Heart left ventricle (tissue), 16 donors: ENCODE measurements at regions of chr6 and their contacts with region 1.

Region 1: DNA sequence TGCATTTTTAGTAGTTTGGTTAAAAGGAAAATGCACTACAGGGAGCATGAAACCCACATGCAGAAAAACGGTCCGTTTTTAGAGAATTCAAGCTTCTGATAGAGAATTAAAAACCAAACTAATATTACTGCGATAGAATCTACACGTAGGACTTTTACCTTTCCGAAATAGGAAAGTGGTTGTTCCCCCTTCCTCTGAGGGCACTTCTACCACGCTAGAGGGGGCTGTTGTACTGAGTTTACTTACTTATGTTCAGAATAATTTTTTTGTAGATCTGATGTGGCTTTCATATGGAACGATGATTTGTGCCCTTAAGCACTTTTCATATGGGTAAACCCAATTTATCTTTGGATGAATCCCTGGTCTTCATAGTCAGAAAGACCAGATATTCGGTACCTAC is 264.3 kb upstream of the PLN start:
- DNase-seq: peak in 4 of 5 donors; percentile 30 to 50 (median 45)
- ATAC-seq: peak in 3 of 4 donors; percentile 46 to 68 (median 63)
- H3K4me3 ChIP-seq: peak overlapping the region in 2 of 12 donors; percentile 8 to 13
- H3K27ac ChIP-seq: peak overlapping the region in 3 of 12 donors; percentile 4 to 84 (median 77)
- H3K4me1 ChIP-seq: peaks cover 0 to 38% (median 8%) of the 10 kb centered on the region in 12 donors
- H3K27me3 ChIP-seq: no peaks in the 10 kb centered on the region
- CTCF ChIP-seq: peak; percentile 59 to 92 (median 82)
- POLR2A ChIP-seq: no peak

Region 2: GRCh38 chr6:118269659-118270058 is 14.1 kb before region 1 on chr6:
- intact Hi-C with region 1: no loop called
- DNase-seq: no peak
- ATAC-seq: no peak
- H3K4me3 ChIP-seq: no peak overlapping the region
- H3K27ac ChIP-seq: no peak overlapping the region
- H3K4me1 ChIP-seq: no peaks in the 10 kb centered on the region
- H3K27me3 ChIP-seq: no peaks in the 10 kb centered on the region
- CTCF ChIP-seq: no peak
- POLR2A ChIP-seq: no peak

Region 3: GRCh38 chr6:118354641-118355040 is 70.9 kb after region 1 on chr6:
- intact Hi-C with region 1: no loop called
- DNase-seq: no peak
- ATAC-seq: no peak
- H3K4me3 ChIP-seq: no peak overlapping the region
- H3K27ac ChIP-seq: no peak overlapping the region
- H3K4me1 ChIP-seq: peaks cover 0 to 4% (median 0%) of the 10 kb centered on the region in 12 donors
- H3K27me3 ChIP-seq: no peaks in the 10 kb centered on the region
- CTCF ChIP-seq: no peak
- POLR2A ChIP-seq: no peak

Region 4: DNA sequence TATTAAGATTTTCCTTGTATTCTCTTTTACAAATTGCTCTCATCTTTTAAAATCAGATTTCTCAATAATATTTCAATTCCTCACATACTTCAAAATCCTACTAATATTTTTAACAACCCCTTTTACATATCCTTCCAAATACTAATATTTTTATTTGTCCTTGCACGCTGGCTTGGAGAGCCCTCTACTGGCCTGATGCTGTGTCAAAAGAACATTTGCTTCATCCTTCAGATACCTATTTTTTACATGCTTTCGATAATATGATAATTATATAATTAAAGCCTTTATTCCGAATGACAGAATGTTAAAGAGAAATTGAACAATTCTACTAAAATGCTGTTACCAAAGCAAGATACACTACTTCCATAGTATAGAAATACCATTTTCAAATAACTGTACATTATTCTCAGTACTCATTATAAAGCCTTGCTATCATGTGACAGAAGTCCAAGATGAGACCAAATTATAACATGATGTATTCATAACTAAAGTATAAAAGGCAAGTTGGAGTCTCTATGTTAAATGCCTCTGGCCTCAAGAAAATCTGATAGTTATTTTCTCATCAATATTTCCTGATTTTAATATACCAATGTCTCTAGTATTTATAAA is 225.3 kb after region 1 on chr6:
- intact Hi-C with region 1: loop called (anchors 1 to 5 kb)
- DNase-seq: peak in 4 of 5 donors; percentile 35 to 51 (median 44)
- ATAC-seq: peak in 1 of 4 donors; percentile 43
- H3K4me3 ChIP-seq: no peak overlapping the region
- H3K27ac ChIP-seq: peak overlapping the region in 11 of 12 donors; percentile 21 to 87 (median 79)
- H3K4me1 ChIP-seq: peaks cover 0 to 25% (median 8%) of the 10 kb centered on the region in 12 donors
- H3K27me3 ChIP-seq: no peaks in the 10 kb centered on the region
- CTCF ChIP-seq: peak; percentile 53 to 81 (median 70)
- POLR2A ChIP-seq: no peak

Region 5: DNA sequence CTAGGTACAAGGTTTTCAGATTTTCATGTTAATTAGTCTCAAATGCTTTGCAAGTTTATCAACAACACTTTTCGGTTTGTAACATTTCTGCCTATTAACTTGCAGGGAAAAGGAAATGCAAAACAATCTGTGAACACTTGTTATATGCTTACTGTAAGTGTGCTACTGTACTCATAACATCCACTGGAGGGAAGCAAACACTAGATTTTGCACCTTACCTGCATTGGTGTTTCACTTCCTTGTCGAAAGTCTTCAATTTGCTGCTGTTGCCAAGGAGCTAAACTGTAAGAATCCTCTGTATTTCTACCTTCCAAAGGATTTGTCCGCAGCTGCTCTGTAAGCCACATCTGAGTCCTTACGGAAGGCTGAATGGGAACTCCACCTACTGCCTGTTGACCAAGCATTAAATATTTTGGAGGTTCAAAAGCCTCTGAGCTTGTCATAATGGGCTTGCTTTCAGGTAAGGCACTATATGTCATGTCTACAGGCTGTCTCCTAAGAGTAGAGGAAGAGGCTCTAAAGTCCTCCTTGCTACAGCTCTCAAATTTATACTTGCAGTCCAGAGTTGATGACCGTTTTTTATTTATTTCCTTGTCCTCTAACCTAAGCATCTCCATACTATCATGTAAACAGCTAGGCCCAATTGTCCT is 281.7 kb after region 1 on chr6:
- intact Hi-C with region 1: loop called in 1 of 10 experiments (anchors 5 kb)
- DNase-seq: no peak
- ATAC-seq: peak in 3 of 4 donors; percentile 34 to 42 (median 37)
- H3K4me3 ChIP-seq: no peak overlapping the region
- H3K27ac ChIP-seq: no peak overlapping the region
- H3K4me1 ChIP-seq: peaks cover 0 to 20% (median 1%) of the 10 kb centered on the region in 12 donors
- H3K27me3 ChIP-seq: no peaks in the 10 kb centered on the region
- CTCF ChIP-seq: peak in 10 of 12 donors; percentile 21 to 55 (median 34)
- POLR2A ChIP-seq: no peak

Region 6: GRCh38 chr6:118776607-118777549 is 493.1 kb after region 1 on chr6:
- intact Hi-C with region 1: loop called in 8 of 10 experiments (anchors 5 to 10 kb)
- DNase-seq: peak in 4 of 5 donors; percentile 33 to 61 (median 56)
- ATAC-seq: peak; percentile 51 to 81 (median 76)
- H3K4me3 ChIP-seq: peak overlapping the region in 6 of 12 donors; percentile 9 to 32 (median 30)
- H3K27ac ChIP-seq: no peak overlapping the region
- H3K4me1 ChIP-seq: peaks cover 0 to 26% (median 5%) of the 10 kb centered on the region in 12 donors
- H3K27me3 ChIP-seq: no peaks in the 10 kb centered on the region
- CTCF ChIP-seq: peak; percentile 66 to 85 (median 75)
- POLR2A ChIP-seq: no peak

Region 7: DNA sequence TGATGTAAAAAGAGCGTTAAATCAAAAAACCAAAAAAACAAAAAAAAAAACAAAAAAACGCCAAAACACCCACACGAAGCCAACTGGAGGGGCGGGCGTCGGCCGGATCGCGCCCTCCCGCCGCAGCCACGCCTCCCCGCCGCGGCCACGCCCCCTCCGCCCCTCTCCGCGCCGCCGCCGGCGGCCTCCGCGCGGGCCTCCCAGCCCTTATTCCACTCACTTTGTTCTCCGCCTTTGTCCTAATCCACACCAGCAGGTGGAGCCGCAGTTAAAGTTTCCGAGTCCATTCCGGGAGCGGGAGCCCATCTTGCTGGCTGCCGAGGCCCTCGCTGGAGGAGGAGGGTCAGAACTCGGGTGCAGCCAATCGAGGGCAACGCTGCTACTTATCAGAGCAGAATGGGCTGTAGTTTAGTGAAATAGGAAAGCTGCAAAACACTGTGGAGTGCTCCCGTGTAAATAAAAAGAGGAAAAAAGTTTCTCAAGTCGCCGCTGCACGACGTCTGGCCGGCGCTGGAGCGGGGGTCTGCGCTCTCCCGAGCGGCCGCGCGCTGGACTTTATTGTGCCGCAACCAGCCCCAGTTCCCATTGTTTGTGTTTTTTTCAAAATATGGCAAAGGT is 610.1 kb after region 1 on chr6 and contains the start of gene ASF1A:
- intact Hi-C with region 1: loop called in 1 of 10 experiments (anchors 10 kb)
- DNase-seq: peak; percentile 96 to 98 (median 98)
- ATAC-seq: peak; percentile 93 to 97 (median 95)
- H3K4me3 ChIP-seq: peak within 1 kb of the TSS; percentile 73 to 99 (median 90)
- H3K27ac ChIP-seq: peak within 1 kb of the TSS; percentile 86 to 98 (median 94)
- H3K4me1 ChIP-seq: peaks cover 0 to 59% (median 27%) of the 10 kb centered on the region in 12 donors
- H3K27me3 ChIP-seq: no peaks in the 10 kb centered on the region
- CTCF ChIP-seq: peak; percentile 34 to 81 (median 56)
- POLR2A ChIP-seq: peak; percentile 48 to 76
- total RNA-seq, gene ASF1A: 9.8 to 28.9 (median 22.1) TPM